CD14-positive monocyte (primary cell): ENCODE measurements at regions of chr12 and their contacts with region 1.

Region 1: GRCh38 chr12:89192428-89192827 is 159.9 kb downstream of the DUSP6 start:
- DNase-seq: peak in 1 of 3 donors; percentile 18
- H3K4me3 ChIP-seq: no peak overlapping the region
- H3K4me3 Mint-ChIP-seq: no peak overlapping the region
- H3K27ac ChIP-seq: no peak overlapping the region
- H3K27ac Mint-ChIP-seq: peak overlapping the region in 1 of 7 donors; percentile 23
- H3K4me1 ChIP-seq: no peaks in the 10 kb centered on the region
- H3K4me1 Mint-ChIP-seq: peaks cover 3% of the 10 kb centered on the region
- H3K27me3 ChIP-seq: no peaks in the 10 kb centered on the region
- H3K27me3 Mint-ChIP-seq: no peaks in the 10 kb centered on the region
- CTCF ChIP-seq: no peak

Region 2: DNA sequence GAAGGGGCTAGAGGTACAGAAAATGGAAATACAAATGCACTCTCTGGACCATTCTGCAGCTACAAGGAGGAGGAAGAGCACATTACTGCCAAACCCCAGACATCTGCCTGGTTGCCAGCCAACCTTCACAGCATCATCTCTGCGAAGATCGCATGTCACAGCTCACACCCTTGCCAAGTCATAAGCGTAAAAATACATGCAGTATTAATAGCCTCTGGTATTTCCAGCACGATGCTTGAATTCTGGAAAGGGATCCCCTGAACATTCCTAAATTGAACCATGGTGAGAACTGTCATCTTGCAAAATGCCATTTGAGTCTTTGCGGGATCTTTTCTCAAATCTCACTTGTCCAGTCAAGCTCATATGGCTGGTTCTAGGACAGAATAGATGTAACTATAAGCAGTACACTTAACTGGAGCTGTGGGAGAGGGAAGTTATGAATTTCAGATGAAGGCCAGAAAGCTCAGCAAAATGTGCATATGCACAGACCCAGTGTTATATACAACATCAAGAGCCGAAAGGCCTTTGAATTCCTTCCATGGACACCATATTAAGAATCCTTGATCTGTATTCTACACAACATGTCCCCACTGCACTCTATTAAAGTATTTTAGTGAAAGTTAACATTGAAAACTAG is 51.7 kb before region 1 on chr12:
- intact Hi-C with region 1: loop called in 1 of 2 experiments (anchors 10 kb)
- DNase-seq: no peak
- H3K4me3 ChIP-seq: no peak overlapping the region
- H3K4me3 Mint-ChIP-seq: no peak overlapping the region
- H3K27ac ChIP-seq: no peak overlapping the region
- H3K27ac Mint-ChIP-seq: no peak overlapping the region
- H3K4me1 ChIP-seq: peaks cover 6 to 8% of the 10 kb centered on the region in 2 donors
- H3K4me1 Mint-ChIP-seq: peaks cover 15% of the 10 kb centered on the region
- H3K27me3 ChIP-seq: no peaks in the 10 kb centered on the region
- H3K27me3 Mint-ChIP-seq: no peaks in the 10 kb centered on the region
- CTCF ChIP-seq: no peak

Region 3: DNA sequence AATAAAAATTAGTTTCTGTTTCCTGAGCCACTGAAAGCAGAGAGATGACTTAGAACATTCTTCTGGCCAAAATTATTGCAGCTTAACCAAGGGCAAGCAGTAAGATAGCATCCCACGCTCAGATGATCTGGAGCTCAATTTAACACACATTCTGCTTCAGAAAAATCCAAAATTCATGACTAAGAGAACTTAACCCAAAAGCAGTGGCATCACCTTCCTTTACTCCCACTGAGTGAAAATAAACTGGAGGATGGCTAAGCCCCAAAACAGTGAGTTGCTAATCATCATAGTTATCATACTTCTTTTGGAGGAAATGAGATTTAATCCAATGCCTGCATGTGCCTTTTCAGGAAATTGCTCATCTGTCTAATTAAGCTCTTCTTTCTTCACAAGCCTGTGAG is 35.6 kb before region 1 on chr12:
- intact Hi-C with region 1: no loop called
- DNase-seq: peak; percentile 78 to 92 (median 86)
- H3K4me3 ChIP-seq: peak overlapping the region in 1 of 3 experiments; percentile 29
- H3K4me3 Mint-ChIP-seq: peak overlapping the region in 1 of 2 donors; percentile 53
- H3K27ac ChIP-seq: peak overlapping the region; percentile 35 to 98
- H3K27ac Mint-ChIP-seq: peak overlapping the region; percentile 97 to 99 (median 98)
- H3K4me1 ChIP-seq: peaks cover 75 to 79% of the 10 kb centered on the region in 2 donors
- H3K4me1 Mint-ChIP-seq: peaks cover 46% of the 10 kb centered on the region
- H3K27me3 ChIP-seq: no peaks in the 10 kb centered on the region
- H3K27me3 Mint-ChIP-seq: no peaks in the 10 kb centered on the region
- CTCF ChIP-seq: no peak